GM12878 (cell line): ENCODE measurements at regions of chr1 and their contacts with region 1.

Region 1: DNA sequence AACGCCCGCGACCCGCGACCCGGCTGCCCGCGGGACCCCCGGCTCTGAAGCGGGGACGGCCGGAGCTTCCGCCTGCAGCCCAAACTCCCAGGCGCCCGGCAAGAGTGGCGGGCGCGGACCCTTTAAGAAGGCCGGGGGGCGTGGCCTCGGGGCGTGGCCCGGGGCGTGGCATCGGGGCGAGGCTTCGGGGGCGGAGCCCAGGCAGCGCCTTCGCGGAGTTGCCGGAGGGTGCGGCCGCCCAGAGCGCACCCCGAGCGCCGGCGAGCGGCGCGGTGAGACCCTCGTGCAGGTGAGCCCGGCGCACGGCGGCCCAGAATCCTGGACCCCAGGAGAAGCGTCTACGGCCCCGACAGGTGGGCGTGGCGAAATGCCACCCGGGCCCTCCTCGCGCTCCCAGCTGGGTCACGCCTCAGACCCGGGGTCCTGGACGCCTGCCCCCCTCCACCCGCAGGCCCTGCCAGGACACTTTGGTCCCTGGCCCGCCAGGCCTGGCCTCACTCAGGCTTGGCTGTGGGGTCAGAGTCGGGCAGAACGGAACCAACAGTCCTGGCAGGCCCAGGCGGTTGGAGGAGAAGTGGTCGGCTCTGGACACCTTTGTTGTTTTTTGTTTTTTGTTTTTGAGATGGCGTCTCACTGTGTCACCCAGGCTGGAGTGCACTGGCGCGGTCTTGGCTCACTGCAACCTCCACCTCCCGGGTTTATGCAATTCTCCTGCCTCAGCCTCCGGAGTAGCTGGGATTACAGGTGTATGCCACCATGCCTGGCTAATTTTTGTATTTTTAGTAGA is 14.4 kb downstream of the RNF223 start:
- DNase-seq: no peak
- ATAC-seq: peak; percentile 81
- H3K4me3 ChIP-seq: peak overlapping the region; percentile 67; the same call in 1 of the 2 replicates
- H3K27ac ChIP-seq: no peak overlapping the region
- H3K4me1 ChIP-seq: peaks cover 28% of the 10 kb centered on the region
- H3K27me3 ChIP-seq: no peaks in the 10 kb centered on the region
- CTCF ChIP-seq: 0 out of 6 replicates have a peak, but pooled peaks of 1 of the 3 experiments have one; percentile 10
- EP300 ChIP-seq: no peak
- POLR2A ChIP-seq: no peak
- RAD21 ChIP-seq: no peak

Region 2: DNA sequence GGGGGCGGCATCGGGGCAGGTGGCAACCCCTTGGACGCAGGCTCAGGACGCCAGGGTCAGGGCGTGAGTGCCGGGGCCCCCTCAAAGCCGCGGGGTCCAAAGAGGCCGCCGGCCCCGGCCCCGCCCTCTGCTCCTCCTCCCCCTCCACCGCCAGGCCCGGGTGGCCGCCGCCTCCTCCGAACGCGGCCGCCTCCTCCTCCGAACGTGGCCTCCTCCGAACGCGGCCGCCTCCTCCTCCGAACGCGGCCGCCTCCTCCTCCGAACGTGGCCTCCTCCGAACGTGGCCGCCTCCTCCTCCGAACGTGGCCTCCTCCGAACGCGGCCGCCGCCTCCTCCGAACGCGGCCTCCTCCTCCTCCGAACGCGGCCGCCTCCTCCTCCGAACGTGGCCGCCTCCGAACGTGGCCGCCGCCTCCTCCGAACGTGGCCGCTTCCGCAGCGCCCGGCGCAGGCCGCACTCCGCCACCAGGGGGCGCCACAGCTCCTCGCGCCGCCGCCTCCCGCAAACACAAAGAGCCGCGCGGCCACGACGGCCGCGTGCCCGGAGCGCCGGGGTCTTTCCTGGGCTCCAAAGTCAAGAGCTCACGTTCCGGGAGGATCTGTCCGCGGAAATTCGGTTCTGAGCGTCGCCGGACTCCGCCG is 155.3 kb before region 1 on chr1:
- CTCF ChIA-PET with region 1: interaction called, 6 read pairs
- POLR2A ChIA-PET with region 1: no interaction called
- RAD21 ChIA-PET with region 1: interaction called, 16 read pairs
- SMC1A ChIA-PET with region 1: no interaction called
- in situ Hi-C with region 1: no loop called
- intact Hi-C with region 1: loop called (anchors 10 kb)
- DNase-seq: no peak
- ATAC-seq: peak; percentile 90
- H3K4me3 ChIP-seq: peak overlapping the region; percentile 24; the same call in 1 of the 2 replicates
- H3K27ac ChIP-seq: no peak overlapping the region
- H3K4me1 ChIP-seq: peaks cover 7% of the 10 kb centered on the region
- H3K27me3 ChIP-seq: no peaks in the 10 kb centered on the region; a peak in 1 of 4 replicates
- CTCF ChIP-seq: peak; percentile 66 to 95 (median 72); a peak in 5 of 6 replicates
- EP300 ChIP-seq: no peak
- POLR2A ChIP-seq: peak; percentile 58
- RAD21 ChIP-seq: peak; percentile 76

Region 3: GRCh38 chr1:993379-993995 is 66.2 kb before region 1 on chr1:
- CTCF ChIA-PET with region 1: interaction called, 15 read pairs
- POLR2A ChIA-PET with region 1: interaction called, 5 read pairs
- RAD21 ChIA-PET with region 1: interaction called, 6 read pairs
- SMC1A ChIA-PET with region 1: interaction called, 3 read pairs
- in situ Hi-C with region 1: no loop called
- intact Hi-C with region 1: loop called (anchors 1 kb)
- DNase-seq: no peak
- ATAC-seq: no peak
- H3K4me3 ChIP-seq: no peak overlapping the region
- H3K27ac ChIP-seq: no peak overlapping the region
- H3K4me1 ChIP-seq: peaks cover 20% of the 10 kb centered on the region
- H3K27me3 ChIP-seq: peaks cover 0 to 6% of the 10 kb centered on the region in 2 experiments; a peak in 1 of 4 replicates
- CTCF ChIP-seq: no peak
- EP300 ChIP-seq: no peak
- POLR2A ChIP-seq: no peak
- RAD21 ChIP-seq: no peak

Region 4: GRCh38 chr1:1019122-1019999 is 40.3 kb before region 1 on chr1:
- CTCF ChIA-PET with region 1: interaction called, 68 read pairs
- POLR2A ChIA-PET with region 1: interaction called, 5 read pairs
- RAD21 ChIA-PET with region 1: interaction called, 24 read pairs
- SMC1A ChIA-PET with region 1: interaction called, 11 read pairs
- in situ Hi-C with region 1: loop called (anchors 5 kb)
- intact Hi-C with region 1: loop called (anchors 5 kb)
- DNase-seq: no peak
- ATAC-seq: peak; percentile 64
- H3K4me3 ChIP-seq: no peak overlapping the region
- H3K27ac ChIP-seq: peak overlapping the region; percentile 65
- H3K4me1 ChIP-seq: peaks cover 14% of the 10 kb centered on the region
- H3K27me3 ChIP-seq: no peaks in the 10 kb centered on the region
- CTCF ChIP-seq: peak; percentile 31 to 60 (median 59)
- EP300 ChIP-seq: no peak
- POLR2A ChIP-seq: no peak; the same call in 1 of the 2 replicates
- RAD21 ChIP-seq: no peak; the same call in 1 of the 2 replicates

Region 5: DNA sequence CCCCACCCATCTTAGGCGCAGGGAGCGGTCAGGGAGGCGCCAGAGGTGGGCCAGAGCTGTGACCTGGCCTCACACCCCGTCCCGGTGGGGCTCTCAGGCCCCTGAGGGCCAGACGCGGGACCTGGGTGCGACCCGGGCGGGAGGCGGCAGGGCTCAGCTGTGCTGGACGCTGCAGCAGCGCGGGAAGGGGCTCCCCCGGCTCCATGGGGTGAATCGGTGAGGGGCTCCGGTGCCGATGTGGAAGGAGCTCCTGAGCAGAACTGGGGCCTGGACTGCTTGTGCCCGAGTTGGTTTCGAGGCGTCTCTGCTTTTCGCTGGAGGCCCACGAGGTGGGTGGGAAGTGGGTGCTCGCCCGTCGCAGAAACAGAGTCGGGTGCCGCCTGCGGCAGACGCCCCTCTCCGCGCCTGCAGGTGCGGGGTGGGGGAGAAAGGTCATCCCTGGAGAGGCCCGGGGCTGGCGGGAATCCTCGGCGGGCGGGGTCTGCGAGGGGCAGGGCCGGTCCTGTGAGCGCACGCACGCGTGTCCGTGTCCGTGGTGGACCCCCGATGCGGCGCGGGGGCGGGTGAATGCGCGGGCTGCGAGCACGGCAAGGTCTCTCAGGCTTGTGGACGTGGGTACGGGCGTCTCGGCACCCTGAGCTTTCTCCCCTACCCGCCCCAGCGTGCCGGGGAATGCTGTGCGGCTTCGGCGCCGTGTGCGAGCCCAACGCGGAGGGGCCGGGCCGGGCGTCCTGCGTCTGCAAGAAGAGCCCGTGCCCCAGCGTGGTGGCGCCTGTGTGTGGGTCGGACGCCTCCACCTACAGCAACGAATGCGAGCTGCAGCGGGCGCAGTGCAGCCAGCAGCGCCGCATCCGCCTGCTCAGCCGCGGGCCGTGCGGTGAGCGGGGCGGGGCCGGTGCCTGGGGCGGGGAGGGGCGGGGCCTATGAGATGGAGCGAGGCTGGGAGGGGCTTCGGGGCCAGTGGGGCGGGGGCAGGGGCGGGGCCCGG is 19.4 kb before region 1 on chr1:
- CTCF ChIA-PET with region 1: interaction called, 29 read pairs
- POLR2A ChIA-PET with region 1: interaction called, 9 read pairs
- RAD21 ChIA-PET with region 1: interaction called, 26 read pairs
- SMC1A ChIA-PET with region 1: interaction called, 14 read pairs
- in situ Hi-C with region 1: no loop called
- intact Hi-C with region 1: loop called (anchors 1 kb)
- DNase-seq: no peak
- ATAC-seq: peak; percentile 81
- H3K4me3 ChIP-seq: peak overlapping the region; percentile 32; the same call in 1 of the 2 replicates
- H3K27ac ChIP-seq: no peak overlapping the region
- H3K4me1 ChIP-seq: peaks cover 28% of the 10 kb centered on the region
- H3K27me3 ChIP-seq: no peaks in the 10 kb centered on the region
- CTCF ChIP-seq: peak in 1 of 3 experiments; percentile 14; a peak in 2 of 6 replicates
- EP300 ChIP-seq: no peak
- POLR2A ChIP-seq: peak; percentile 59
- RAD21 ChIP-seq: no peak

Region 6: GRCh38 chr1:1157426-1157913 is 97.8 kb after region 1 on chr1:
- CTCF ChIA-PET with region 1: no interaction called
- POLR2A ChIA-PET with region 1: no interaction called
- RAD21 ChIA-PET with region 1: no interaction called
- SMC1A ChIA-PET with region 1: no interaction called
- in situ Hi-C with region 1: no loop called
- intact Hi-C with region 1: no loop called
- DNase-seq: no peak
- ATAC-seq: peak; percentile 89
- H3K4me3 ChIP-seq: peak overlapping the region; percentile 93
- H3K27ac ChIP-seq: peak overlapping the region; percentile 73
- H3K4me1 ChIP-seq: peaks cover 7% of the 10 kb centered on the region
- H3K27me3 ChIP-seq: no peaks in the 10 kb centered on the region
- CTCF ChIP-seq: no peak
- EP300 ChIP-seq: no peak
- POLR2A ChIP-seq: peak; percentile 18; the same call in 1 of the 2 replicates
- RAD21 ChIP-seq: no peak